Activated CD8-positive, alpha-beta T cell treated with anti-CD3 and anti-CD28 coated beads, Interleukin-2, amount 10 ng/mL, durations not matched to agents 7 days and 5 days (primary cell): ENCODE measurements at regions of chr9 and their contacts with region 1.

Region 1: DNA sequence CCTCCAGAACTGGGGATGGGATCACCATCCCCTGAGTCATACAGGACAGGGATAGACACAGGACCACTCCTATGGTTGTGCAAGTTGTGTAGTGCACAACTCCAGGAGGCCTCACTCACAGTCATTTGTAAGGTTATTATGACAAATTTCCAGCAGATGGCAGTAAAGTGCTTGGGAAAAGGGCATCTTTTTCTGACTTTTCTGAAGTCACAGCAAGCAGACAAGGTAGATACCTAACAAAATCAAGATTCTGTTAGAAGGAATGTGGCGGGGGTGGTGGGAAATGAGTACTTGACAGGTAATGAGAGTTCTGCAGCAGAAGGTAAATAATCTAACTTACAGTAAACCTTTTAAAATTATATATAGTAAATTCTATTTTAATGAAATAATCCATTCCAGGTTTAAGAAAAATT is 16.7 kb upstream of the KIF27 start:
- DNase-seq: peak; percentile 53
- ATAC-seq: peak; percentile 74
- H3K4me3 Mint-ChIP-seq: no peak overlapping the region
- H3K27ac Mint-ChIP-seq: no peak overlapping the region
- H3K4me1 Mint-ChIP-seq: no peaks in the 10 kb centered on the region
- H3K27me3 Mint-ChIP-seq: no peaks in the 10 kb centered on the region

Region 2: GRCh38 chr9:84315278-84315877 is 377.5 kb after region 1 on chr9:
- CTCF ChIA-PET with region 1: interaction called, 15 read pairs
- POLR2A ChIA-PET with region 1: no interaction called
- DNase-seq: peak; percentile 67
- ATAC-seq: peak; percentile 73
- H3K4me3 Mint-ChIP-seq: no peak overlapping the region
- H3K27ac Mint-ChIP-seq: no peak overlapping the region
- H3K4me1 Mint-ChIP-seq: peaks cover 4% of the 10 kb centered on the region
- H3K27me3 Mint-ChIP-seq: no peaks in the 10 kb centered on the region